Mammary epithelial cell (primary cell): ENCODE measurements at regions of chr2 and their contacts with region 1.

Region 1: DNA sequence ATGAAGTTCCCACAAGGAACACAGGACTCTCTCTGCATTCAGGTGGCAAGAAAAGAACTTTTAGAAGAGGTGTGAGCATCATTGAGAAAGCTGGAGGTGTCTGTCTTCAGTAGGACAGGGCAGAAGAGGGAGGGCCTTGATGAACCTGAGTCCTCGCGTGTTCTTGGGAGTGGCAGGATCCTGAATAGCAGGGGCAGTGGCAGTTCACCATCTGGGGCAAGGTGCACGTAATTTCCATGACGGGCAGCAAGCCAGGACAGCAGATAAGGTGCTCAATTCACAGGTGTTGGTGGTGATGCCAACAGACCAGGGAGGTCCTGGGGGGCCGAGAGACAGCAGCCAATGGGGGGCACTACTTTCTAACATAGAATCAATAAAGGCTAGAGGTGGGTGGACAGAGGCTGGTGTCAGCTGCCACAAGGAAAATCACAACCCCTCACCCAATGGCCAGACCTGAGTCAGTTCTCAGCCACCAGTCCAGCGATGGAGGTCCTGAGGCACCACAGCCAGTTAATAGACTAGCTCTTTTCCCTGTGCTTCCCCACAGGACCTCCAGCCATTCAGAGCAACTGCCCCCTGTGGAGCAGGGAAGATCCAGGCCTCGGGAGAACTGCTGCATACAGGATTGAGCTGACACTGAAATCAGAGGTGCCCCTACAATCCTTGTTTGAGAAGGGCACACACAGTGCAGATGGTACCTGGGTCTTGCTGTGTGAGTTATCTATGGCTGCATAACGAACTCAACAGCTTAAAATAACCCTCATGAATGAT is 10.9 kb upstream of the HDAC4 start:
- DNase-seq: no peak
- H3K4me3 ChIP-seq: no peak overlapping the region
- H3K27ac ChIP-seq: no peak overlapping the region
- H3K4me1 ChIP-seq: no peaks in the 10 kb centered on the region
- H3K27me3 ChIP-seq: peaks cover 2% of the 10 kb centered on the region
- CTCF ChIP-seq: no peak

Region 2: GRCh38 chr2:239169311-239170048 is 242.3 kb before region 1 on chr2:
- CTCF ChIA-PET with region 1: no interaction called
- dilution Hi-C with region 1: no loop called
- in situ Hi-C with region 1: no loop called
- intact Hi-C with region 1: no loop called
- DNase-seq: no peak
- H3K4me3 ChIP-seq: no peak overlapping the region
- H3K27ac ChIP-seq: no peak overlapping the region
- H3K4me1 ChIP-seq: no peaks in the 10 kb centered on the region
- H3K27me3 ChIP-seq: no peaks in the 10 kb centered on the region
- CTCF ChIP-seq: no peak

Region 3: DNA sequence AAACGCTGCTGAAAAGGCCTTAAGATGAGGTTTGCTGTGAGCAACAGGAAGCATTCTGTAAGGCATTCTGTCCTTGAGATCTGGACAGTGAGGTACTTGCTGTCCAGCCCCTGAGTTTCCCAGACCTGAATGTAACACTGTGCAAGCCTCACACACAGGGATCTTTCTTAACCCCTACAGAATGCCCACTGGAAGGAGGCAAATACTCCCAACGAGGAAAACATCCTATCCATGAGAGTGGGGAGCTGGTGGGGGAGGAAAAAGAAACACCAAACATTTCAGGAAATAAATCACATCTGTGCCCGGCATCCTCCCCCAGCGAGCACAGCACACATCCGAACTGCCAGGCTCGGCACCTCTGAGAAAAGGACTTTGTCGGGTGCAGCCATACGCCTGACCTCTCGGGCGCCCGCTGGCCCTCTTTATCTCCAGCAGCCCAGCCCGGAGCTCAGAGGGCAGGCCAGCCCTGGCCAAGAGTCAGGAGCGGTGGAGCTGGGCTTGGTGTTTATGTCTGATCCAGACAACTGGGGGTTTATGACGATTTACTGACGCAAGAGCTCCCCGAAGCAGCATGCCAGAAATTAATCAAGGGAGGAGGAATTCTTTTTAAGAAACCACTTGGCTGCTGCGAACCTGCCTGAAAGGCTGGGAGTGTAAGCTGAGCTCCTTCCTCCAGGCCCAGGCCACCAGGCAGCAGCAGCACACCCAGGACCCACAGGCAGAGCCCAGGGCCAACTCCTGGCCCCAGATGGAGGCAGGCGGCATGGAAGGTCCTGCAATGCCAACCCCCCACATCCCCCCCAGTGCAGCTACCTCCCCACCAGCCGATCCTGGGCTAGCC is 83.2 kb before region 1 on chr2:
- CTCF ChIA-PET with region 1: no interaction called
- dilution Hi-C with region 1: no loop called
- in situ Hi-C with region 1: no loop called
- intact Hi-C with region 1: no loop called
- DNase-seq: no peak
- H3K4me3 ChIP-seq: no peak overlapping the region
- H3K27ac ChIP-seq: no peak overlapping the region
- H3K4me1 ChIP-seq: peaks cover 8% of the 10 kb centered on the region
- H3K27me3 ChIP-seq: no peaks in the 10 kb centered on the region
- CTCF ChIP-seq: no peak

Region 4: GRCh38 chr2:239339726-239340601 is 71.8 kb before region 1 on chr2:
- CTCF ChIA-PET with region 1: no interaction called
- dilution Hi-C with region 1: loop called (anchors 5 kb)
- in situ Hi-C with region 1: no loop called
- intact Hi-C with region 1: no loop called
- DNase-seq: no peak
- H3K4me3 ChIP-seq: no peak overlapping the region
- H3K27ac ChIP-seq: no peak overlapping the region
- H3K4me1 ChIP-seq: no peaks in the 10 kb centered on the region
- H3K27me3 ChIP-seq: no peaks in the 10 kb centered on the region
- CTCF ChIP-seq: no peak

Region 5: GRCh38 chr2:239369631-239370161 is 42.0 kb before region 1 on chr2:
- CTCF ChIA-PET with region 1: no interaction called
- dilution Hi-C with region 1: loop called (anchors 5 kb)
- in situ Hi-C with region 1: no loop called
- intact Hi-C with region 1: no loop called
- DNase-seq: peak; percentile 6
- H3K4me3 ChIP-seq: no peak overlapping the region
- H3K27ac ChIP-seq: no peak overlapping the region
- H3K4me1 ChIP-seq: peaks cover 4% of the 10 kb centered on the region
- H3K27me3 ChIP-seq: no peaks in the 10 kb centered on the region
- CTCF ChIP-seq: no peak